B cell (primary cell): ENCODE measurements at regions of chr1 and their contacts with region 1.

Region 1: GRCh38 chr1:214328770-214329469 is 48.0 kb downstream of the SMYD2 start:
- DNase-seq: peak; percentile 78
- ATAC-seq: peak; percentile 87
- H3K4me3 ChIP-seq: no peak overlapping the region
- H3K4me3 Mint-ChIP-seq: no peak overlapping the region
- H3K27ac ChIP-seq: no peak overlapping the region
- H3K27ac Mint-ChIP-seq: peak overlapping the region; percentile 10
- H3K4me1 ChIP-seq: no peaks in the 10 kb centered on the region
- H3K4me1 Mint-ChIP-seq: peaks cover 16% of the 10 kb centered on the region
- H3K27me3 ChIP-seq: no peaks in the 10 kb centered on the region
- H3K27me3 Mint-ChIP-seq: no peaks in the 10 kb centered on the region
- CTCF ChIP-seq: peak; percentile 88

Region 2: GRCh38 chr1:213122514-213122929 is 1206.4 kb before region 1 on chr1:
- CTCF ChIA-PET with region 1: interaction called, 8 read pairs
- POLR2A ChIA-PET with region 1: no interaction called
- intact Hi-C with region 1: loop called (anchors 2 kb)
- DNase-seq: peak; percentile 40
- ATAC-seq: no peak
- H3K4me3 ChIP-seq: no peak overlapping the region
- H3K4me3 Mint-ChIP-seq: no peak overlapping the region
- H3K27ac ChIP-seq: no peak overlapping the region
- H3K27ac Mint-ChIP-seq: no peak overlapping the region
- H3K4me1 ChIP-seq: no peaks in the 10 kb centered on the region
- H3K4me1 Mint-ChIP-seq: no peaks in the 10 kb centered on the region
- H3K27me3 ChIP-seq: no peaks in the 10 kb centered on the region
- H3K27me3 Mint-ChIP-seq: no peaks in the 10 kb centered on the region
- CTCF ChIP-seq: peak; percentile 86

Region 3: DNA sequence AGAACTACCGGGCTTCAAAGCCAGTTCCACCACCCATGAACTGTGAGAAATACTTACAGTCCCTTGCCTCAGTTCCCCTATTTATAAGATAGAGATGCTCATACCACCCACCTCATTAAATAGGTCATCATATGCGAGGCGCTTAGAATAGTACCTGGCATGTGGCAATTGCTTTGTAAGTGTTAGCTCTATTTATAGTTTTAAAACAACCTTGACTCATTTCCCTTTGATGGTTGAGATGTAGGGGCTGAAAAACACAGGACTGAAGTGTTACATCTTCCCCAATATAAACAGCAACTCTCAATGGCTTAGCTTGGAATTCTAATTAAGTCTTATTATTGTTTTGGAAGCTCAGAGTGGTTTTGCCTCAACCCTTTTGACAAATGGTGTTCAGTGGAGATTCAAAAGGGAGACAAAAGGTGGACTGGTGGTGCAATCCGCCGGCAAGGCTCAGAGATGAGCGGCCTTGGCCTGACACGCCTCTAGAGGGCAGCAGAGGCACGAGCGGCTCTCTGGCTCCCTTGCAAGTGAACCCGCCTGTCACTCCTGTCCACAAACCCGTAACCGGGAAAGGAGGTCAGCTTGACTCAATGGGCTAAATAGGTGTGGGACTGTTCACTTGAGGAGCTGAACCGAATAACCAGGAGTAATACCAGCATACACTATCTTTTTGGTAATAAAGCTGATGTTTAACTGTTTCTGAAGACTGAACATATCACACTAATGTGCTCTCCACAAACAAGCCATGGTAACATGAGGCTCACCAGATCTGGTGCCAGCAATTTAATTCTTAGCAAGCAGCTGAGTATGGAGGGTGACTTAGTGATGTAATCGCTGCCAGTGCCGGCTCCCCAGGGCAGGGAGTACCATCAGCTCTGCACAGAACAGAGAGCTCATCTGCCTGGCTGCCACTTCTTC is 67.5 kb before region 1 on chr1:
- CTCF ChIA-PET with region 1: interaction called, 643 read pairs
- POLR2A ChIA-PET with region 1: no interaction called
- intact Hi-C with region 1: loop called (anchors 1 kb)
- DNase-seq: peak; percentile 78
- ATAC-seq: peak; percentile 90
- H3K4me3 ChIP-seq: no peak overlapping the region
- H3K4me3 Mint-ChIP-seq: no peak overlapping the region
- H3K27ac ChIP-seq: no peak overlapping the region
- H3K27ac Mint-ChIP-seq: no peak overlapping the region
- H3K4me1 ChIP-seq: peaks cover 3 to 4% of the 10 kb centered on the region in 2 donors
- H3K4me1 Mint-ChIP-seq: peaks cover 1% of the 10 kb centered on the region
- H3K27me3 ChIP-seq: peaks cover 0 to 43% (median 29%) of the 10 kb centered on the region in 4 experiments
- H3K27me3 Mint-ChIP-seq: peaks cover 64% of the 10 kb centered on the region
- CTCF ChIP-seq: peak; percentile 99

Region 4: GRCh38 chr1:214303141-214303930 is 25.6 kb before region 1 on chr1:
- CTCF ChIA-PET with region 1: interaction called, 13 read pairs
- POLR2A ChIA-PET with region 1: no interaction called
- intact Hi-C with region 1: no loop called
- DNase-seq: no peak
- ATAC-seq: no peak
- H3K4me3 ChIP-seq: no peak overlapping the region
- H3K4me3 Mint-ChIP-seq: no peak overlapping the region
- H3K27ac ChIP-seq: no peak overlapping the region
- H3K27ac Mint-ChIP-seq: no peak overlapping the region
- H3K4me1 ChIP-seq: peaks cover 0 to 3% of the 10 kb centered on the region in 2 donors
- H3K4me1 Mint-ChIP-seq: peaks cover 13% of the 10 kb centered on the region
- H3K27me3 ChIP-seq: no peaks in the 10 kb centered on the region
- H3K27me3 Mint-ChIP-seq: no peaks in the 10 kb centered on the region
- CTCF ChIP-seq: no peak

Region 5: DNA sequence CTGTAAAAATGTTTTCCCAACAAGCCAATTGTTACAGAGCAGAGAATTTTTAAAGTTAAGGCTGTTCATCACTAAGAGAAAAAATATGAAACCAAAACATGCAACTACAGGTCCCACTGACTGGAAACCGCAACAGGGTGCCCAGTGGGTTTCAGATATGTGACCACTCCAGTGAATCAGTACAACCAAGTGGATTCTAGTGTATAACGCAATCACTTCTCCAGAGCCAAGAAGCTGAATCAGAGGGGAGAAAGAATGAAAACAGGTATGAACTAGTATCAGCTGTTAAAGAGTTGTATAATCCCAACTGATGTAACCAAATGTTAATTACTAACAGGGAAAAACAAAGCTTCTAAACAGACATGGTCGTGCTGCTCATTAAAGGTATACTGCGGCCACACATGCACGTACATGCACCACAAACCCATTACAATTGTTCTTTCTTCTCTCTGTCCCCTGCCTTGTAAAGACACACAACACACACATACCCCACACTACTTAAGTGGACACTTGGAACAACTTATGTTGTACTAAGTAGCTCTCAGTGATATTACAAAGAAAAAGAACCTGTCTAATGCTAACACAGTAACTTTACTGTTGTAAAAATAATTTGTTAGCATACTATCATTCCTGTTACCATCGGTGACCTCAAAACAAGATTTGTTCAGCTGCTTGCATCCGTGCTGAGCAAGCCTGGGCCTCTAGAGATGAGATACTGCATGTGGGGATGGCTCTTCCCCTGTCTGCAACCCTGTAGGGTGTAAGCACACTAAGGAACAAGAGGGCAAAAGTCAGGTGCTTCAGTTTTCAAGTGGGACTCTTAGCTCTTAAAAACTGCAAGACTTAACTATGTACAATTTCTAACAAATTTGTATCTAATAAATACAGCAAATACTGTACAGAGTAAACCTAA is 148.3 kb after region 1 on chr1:
- CTCF ChIA-PET with region 1: no interaction called
- POLR2A ChIA-PET with region 1: no interaction called
- intact Hi-C with region 1: no loop called
- DNase-seq: no peak
- ATAC-seq: no peak
- H3K4me3 ChIP-seq: no peak overlapping the region
- H3K4me3 Mint-ChIP-seq: no peak overlapping the region
- H3K27ac ChIP-seq: no peak overlapping the region
- H3K27ac Mint-ChIP-seq: no peak overlapping the region
- H3K4me1 ChIP-seq: no peaks in the 10 kb centered on the region
- H3K4me1 Mint-ChIP-seq: no peaks in the 10 kb centered on the region
- H3K27me3 ChIP-seq: peaks cover 0 to 3% (median 0%) of the 10 kb centered on the region in 4 experiments
- H3K27me3 Mint-ChIP-seq: peaks cover 12% of the 10 kb centered on the region
- CTCF ChIP-seq: no peak

Region 6: DNA sequence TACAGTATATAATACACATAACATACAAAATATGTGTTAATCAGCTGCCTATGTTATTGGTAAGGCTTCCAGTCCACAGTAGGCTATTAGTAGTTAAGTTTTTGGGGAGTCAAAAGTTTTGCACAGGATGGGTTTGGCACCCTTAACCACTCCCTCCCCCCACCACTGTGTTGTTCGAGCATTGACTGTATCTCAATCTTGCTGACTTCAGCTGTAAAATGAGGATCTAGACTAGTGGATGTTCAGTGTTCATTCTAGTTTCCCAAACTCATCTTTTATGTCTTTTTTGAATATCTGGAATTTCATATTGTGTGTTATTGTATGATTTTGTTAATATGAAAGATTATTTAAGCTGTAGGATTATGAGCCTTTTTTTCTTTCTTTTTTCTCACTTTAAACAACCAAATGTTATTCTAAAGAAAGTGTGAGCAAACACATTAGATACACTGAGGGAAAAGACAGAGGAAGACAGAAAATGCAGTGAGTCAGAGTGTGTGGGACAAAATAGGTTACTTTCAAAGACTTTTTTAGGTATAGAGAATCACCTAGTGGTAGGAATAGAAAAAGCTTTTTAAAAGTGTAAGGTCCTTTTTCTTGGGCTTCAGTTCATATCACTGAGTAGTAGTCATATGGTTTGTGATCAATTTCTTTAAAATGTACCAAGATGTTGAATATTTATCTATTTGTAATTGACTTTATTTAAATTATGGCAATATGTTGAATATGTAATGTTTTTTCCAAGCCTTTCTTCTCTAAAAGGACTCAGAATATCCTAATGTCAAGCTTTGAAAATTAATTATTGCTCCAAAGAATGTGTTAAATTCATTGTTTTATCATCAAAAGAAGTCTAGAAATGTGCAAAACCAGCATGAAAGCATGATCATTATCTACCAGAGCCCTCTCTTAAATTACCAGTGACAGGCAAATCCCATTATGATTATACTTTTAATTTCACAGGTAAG is 256.2 kb after region 1 on chr1:
- CTCF ChIA-PET with region 1: interaction called, 23 read pairs
- POLR2A ChIA-PET with region 1: no interaction called
- intact Hi-C with region 1: loop called (anchors 1 kb)
- DNase-seq: no peak
- ATAC-seq: no peak
- H3K4me3 ChIP-seq: no peak overlapping the region
- H3K4me3 Mint-ChIP-seq: no peak overlapping the region
- H3K27ac ChIP-seq: no peak overlapping the region
- H3K27ac Mint-ChIP-seq: no peak overlapping the region
- H3K4me1 ChIP-seq: no peaks in the 10 kb centered on the region
- H3K4me1 Mint-ChIP-seq: no peaks in the 10 kb centered on the region
- H3K27me3 ChIP-seq: peaks cover 0 to 8% (median 3%) of the 10 kb centered on the region in 4 experiments
- H3K27me3 Mint-ChIP-seq: peaks cover 36% of the 10 kb centered on the region
- CTCF ChIP-seq: peak; percentile 28

Region 7: DNA sequence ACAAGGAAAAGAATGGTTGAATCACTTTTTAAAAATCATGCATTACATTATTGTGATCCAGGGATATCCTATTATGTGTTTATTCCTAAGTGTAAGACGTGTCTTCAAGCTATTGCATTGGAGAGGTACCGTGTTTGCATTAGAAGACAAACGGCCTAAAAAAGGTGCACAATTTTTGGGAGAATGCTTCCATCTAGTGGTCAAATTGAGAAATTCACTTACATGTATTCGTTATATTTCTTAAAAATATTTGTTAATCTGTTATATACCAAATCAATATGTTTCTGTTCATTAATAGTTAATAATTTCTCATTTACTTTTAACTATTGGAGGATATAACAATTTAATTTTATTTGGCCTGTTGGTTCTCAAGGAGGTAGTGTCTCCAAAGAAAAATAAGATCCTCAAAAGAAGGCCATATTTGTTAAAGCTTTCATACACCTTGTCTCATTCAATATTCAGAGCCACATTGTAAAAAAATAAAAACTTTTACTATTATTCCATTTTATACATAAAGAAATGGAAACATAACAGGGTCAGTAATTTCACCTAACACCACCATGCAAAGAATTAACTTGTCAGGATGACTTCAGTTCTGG is 1197.7 kb after region 1 on chr1:
- CTCF ChIA-PET with region 1: interaction called, 3 read pairs
- POLR2A ChIA-PET with region 1: no interaction called
- intact Hi-C with region 1: loop called (anchors 5 kb)
- DNase-seq: peak; percentile 45
- ATAC-seq: no peak
- H3K4me3 ChIP-seq: no peak overlapping the region
- H3K4me3 Mint-ChIP-seq: no peak overlapping the region
- H3K27ac ChIP-seq: no peak overlapping the region
- H3K27ac Mint-ChIP-seq: no peak overlapping the region
- H3K4me1 ChIP-seq: no peaks in the 10 kb centered on the region
- H3K4me1 Mint-ChIP-seq: no peaks in the 10 kb centered on the region
- H3K27me3 ChIP-seq: peaks cover 0 to 8% (median 0%) of the 10 kb centered on the region in 4 experiments
- H3K27me3 Mint-ChIP-seq: peaks cover 3% of the 10 kb centered on the region
- CTCF ChIP-seq: peak; percentile 81